Left colon (tissue), 2 donors: ENCODE measurements at regions of chr4 and their contacts with region 1.

Region 1: GRCh38 chr4:183840311-183840710 is 64.8 kb upstream of the STOX2 start:
- DNase-seq: peak; percentile 50 to 87
- ATAC-seq: peak; percentile 81

Region 2: GRCh38 chr4:184097241-184097605 is 256.9 kb after region 1 on chr4:
- intact Hi-C with region 1: loop called in 1 of 2 experiments (anchors 10 kb)
- DNase-seq: peak; percentile 44 to 50
- ATAC-seq: peak; percentile 55

Region 3: GRCh38 chr4:184168406-184169019 is 328.2 kb after region 1 on chr4:
- intact Hi-C with region 1: loop called (anchors 2 to 10 kb)
- DNase-seq: peak; percentile 41 to 72
- ATAC-seq: peak; percentile 96